H1 (cell line): ENCODE measurements at regions of chr1 and their contacts with region 1.

Region 1: DNA sequence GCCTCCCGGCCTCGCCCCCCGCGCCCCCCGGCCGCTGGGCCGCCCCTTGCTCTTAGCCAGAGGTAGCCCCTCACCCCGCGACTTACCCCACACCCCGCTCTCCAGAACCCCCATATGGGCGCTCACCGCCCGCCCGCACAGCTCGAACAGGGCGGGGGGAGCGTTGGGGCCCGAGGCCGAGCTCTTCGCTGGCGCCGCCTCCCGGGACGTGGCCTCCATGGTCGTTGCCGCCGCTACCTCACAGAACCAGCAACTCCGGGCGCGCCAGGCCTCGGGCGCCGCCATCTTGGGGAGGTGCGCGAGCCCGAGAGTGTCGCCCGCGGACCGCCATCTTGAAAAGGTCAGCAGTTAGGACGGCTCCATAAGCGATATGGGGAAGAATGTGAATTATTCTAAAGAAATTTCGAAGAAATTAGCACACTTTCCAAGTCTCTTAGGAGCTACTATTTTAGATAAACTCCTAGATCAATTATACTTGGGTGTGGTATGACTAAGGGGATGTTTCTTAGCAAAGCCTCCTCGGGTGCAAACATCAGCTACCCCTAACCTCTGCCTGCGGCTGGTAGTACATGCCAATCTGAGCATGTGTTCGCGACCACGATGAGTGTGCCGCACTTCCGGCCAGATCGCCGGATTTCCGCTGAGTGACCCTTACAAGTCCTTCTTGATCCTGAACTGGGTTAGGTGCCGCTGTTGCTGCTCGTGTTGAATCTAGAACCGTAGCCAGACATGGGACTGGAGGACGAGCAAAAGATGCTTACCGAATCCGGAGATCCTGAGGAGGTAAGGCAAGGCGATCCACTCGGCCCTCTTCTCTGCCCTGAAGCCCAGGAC is at the starts of genes LRRC41 and UQCRH:
- DNase-seq: peak; percentile 93 to 97
- H3K4me3 ChIP-seq: peak within 1 kb of the TSS; percentile 84 to 97 (median 90)
- H3K27ac ChIP-seq: peak within 1 kb of the TSS; percentile 92
- H3K4me1 ChIP-seq: peaks cover 5 to 17% (median 14%) of the 10 kb centered on the region in 4 experiments
- H3K27me3 ChIP-seq: no peaks in the 10 kb centered on the region
- CTCF ChIP-seq: peak in 2 of 3 experiments; percentile 3 to 9; a peak in 2 of 4 replicates
- EP300 ChIP-seq: peak in 1 of 2 experiments; percentile 99; a peak in 2 of 3 replicates
- POLR2A ChIP-seq: peak; percentile 62 to 94
- RAD21 ChIP-seq: no peak
- total RNA-seq, gene LRRC41: 36.8 and 37.2 TPM in 2 replicates
- total RNA-seq, gene UQCRH: 621 and 626 TPM in 2 replicates

Region 2: GRCh38 chr1:45998020-45998617 is 305.1 kb before region 1 on chr1:
- CTCF ChIA-PET with region 1: no interaction called
- POLR2A ChIA-PET with region 1: no interaction called
- DNase-seq: no peak
- H3K4me3 ChIP-seq: no peak overlapping the region
- H3K27ac ChIP-seq: no peak overlapping the region
- H3K4me1 ChIP-seq: peaks cover 0 to 5% (median 0%) of the 10 kb centered on the region in 4 experiments; a peak in 1 of 7 replicates
- H3K27me3 ChIP-seq: no peaks in the 10 kb centered on the region
- CTCF ChIP-seq: no peak
- EP300 ChIP-seq: no peak
- POLR2A ChIP-seq: no peak
- RAD21 ChIP-seq: no peak

Region 3: GRCh38 chr1:46247436-46248121 is 55.7 kb before region 1 on chr1 and contains the start of gene RAD54L:
- CTCF ChIA-PET with region 1: interaction called, 4 read pairs
- POLR2A ChIA-PET with region 1: interaction called, 10 read pairs
- DNase-seq: peak; percentile 96 to 98
- H3K4me3 ChIP-seq: peak within 1 kb of the TSS; percentile 87 to 94 (median 92)
- H3K27ac ChIP-seq: peak within 1 kb of the TSS; percentile 94
- H3K4me1 ChIP-seq: peaks cover 4 to 15% (median 5%) of the 10 kb centered on the region in 4 experiments; a peak in 5 of 7 replicates
- H3K27me3 ChIP-seq: no peaks in the 10 kb centered on the region
- CTCF ChIP-seq: no peak
- EP300 ChIP-seq: no peak
- POLR2A ChIP-seq: peak; percentile 75 to 97
- RAD21 ChIP-seq: no peak
- total RNA-seq, gene RAD54L: 47.9 and 50.3 TPM in 2 replicates

Region 4: DNA sequence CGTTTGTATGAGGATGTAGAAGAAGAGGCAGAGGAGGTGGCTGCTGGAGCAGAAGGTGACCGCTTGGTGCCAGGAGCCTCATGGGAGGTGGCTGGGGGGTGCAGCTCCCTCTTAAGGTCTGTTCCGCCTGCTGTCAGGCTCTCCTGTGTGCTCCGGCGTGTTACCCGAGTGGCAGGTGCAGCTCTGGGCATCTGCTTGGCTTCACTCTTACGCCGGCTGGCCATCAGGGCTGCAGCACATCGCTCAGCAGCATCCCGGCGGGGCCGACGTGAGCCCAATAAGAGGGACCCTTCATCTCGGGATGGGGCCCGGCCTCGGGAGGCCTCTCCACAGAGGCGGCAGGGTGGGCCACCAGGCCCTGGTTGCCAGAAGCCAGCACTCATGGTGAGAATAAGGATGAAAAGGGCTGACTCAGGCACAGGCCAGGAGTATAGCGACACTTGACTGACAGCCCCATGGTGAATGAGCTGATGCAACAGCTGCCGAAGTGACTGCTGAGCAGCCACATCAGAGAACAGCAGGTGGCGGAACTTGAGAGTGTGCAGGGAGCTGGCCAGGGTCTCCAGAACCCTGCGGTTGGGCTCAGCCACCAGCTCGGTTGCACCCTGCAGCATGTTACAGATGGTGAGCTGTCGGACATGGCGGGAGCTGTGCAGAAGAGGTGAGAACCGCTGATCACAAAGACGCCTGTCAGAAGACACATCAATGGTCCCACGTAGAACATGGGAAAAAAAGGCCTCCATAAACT is 17.4 kb before region 1 on chr1:
- CTCF ChIA-PET with region 1: interaction called, 3 read pairs
- POLR2A ChIA-PET with region 1: interaction called, 689 read pairs
- DNase-seq: peak in 1 of 2 experiments; percentile 25
- H3K4me3 ChIP-seq: no peak overlapping the region
- H3K27ac ChIP-seq: no peak overlapping the region
- H3K4me1 ChIP-seq: no peaks in the 10 kb centered on the region; a peak in 1 of 7 replicates
- H3K27me3 ChIP-seq: no peaks in the 10 kb centered on the region
- CTCF ChIP-seq: no peak
- EP300 ChIP-seq: no peak
- POLR2A ChIP-seq: no peak
- RAD21 ChIP-seq: no peak

Region 5: DNA sequence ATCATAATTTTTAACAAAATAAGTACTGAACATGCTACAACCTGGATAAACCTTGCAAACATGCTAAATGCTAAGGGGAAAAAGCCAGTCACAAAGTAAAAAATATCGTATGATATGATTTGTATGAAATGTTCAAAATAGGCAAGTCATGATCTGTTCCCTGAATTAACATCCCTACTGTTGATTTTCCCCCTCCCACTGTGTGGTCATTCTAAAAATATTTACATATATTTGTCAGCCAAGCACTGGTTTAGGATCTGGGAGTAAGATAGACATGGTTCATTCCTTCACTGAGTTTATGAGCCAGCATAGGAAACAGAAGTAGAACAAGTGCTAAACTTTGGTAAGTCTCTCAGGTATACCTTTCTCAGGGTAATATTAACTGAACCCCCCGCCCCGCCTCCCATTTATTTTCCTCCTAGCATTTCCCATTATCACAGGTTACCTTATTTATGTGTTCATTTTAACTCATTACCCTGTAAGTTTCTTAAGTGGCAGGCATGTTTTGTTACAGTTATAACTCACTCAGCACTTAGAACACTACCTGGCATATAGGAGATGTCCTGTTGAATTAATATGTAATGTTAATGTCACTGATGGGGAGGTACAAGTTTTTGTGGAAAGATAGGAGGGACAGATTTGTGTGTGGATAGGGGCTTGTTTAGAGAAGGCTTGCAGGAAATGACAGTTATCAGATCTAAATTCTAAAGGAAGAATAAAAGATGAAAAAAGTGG is 12.6 kb after region 1 on chr1:
- CTCF ChIA-PET with region 1: interaction called, 8 read pairs
- POLR2A ChIA-PET with region 1: interaction called, 70 read pairs
- DNase-seq: no peak
- H3K4me3 ChIP-seq: no peak overlapping the region
- H3K27ac ChIP-seq: no peak overlapping the region
- H3K4me1 ChIP-seq: no peaks in the 10 kb centered on the region
- H3K27me3 ChIP-seq: no peaks in the 10 kb centered on the region
- CTCF ChIP-seq: no peak
- EP300 ChIP-seq: no peak
- POLR2A ChIP-seq: peak in 1 of 2 experiments; percentile 30; a peak in 1 of 3 replicates
- RAD21 ChIP-seq: no peak

Region 6: GRCh38 chr1:46333300-46334029 is 30.2 kb after region 1 on chr1:
- CTCF ChIA-PET with region 1: interaction called, 8 read pairs
- POLR2A ChIA-PET with region 1: interaction called, 18 read pairs
- DNase-seq: peak in 1 of 2 experiments; percentile 34
- H3K4me3 ChIP-seq: no peak overlapping the region
- H3K27ac ChIP-seq: no peak overlapping the region
- H3K4me1 ChIP-seq: peaks cover 0 to 3% (median 0%) of the 10 kb centered on the region in 4 experiments; a peak in 1 of 7 replicates
- H3K27me3 ChIP-seq: no peaks in the 10 kb centered on the region
- CTCF ChIP-seq: peak in 2 of 3 experiments; percentile 50 to 55; a peak in 3 of 4 replicates
- EP300 ChIP-seq: no peak
- POLR2A ChIP-seq: no peak
- RAD21 ChIP-seq: peak; percentile 56 to 65

Region 7: GRCh38 chr1:46340404-46341221 is 37.4 kb after region 1 on chr1 and contains the start of gene NSUN4:
- CTCF ChIA-PET with region 1: interaction called, 21 read pairs
- POLR2A ChIA-PET with region 1: interaction called, 22 read pairs
- DNase-seq: peak; percentile 66 to 79
- H3K4me3 ChIP-seq: peak within 1 kb of the TSS; percentile 72 to 91 (median 86)
- H3K27ac ChIP-seq: peak within 1 kb of the TSS; percentile 83
- H3K4me1 ChIP-seq: peaks cover 0 to 7% (median 4%) of the 10 kb centered on the region in 4 experiments; a peak in 4 of 7 replicates
- H3K27me3 ChIP-seq: no peaks in the 10 kb centered on the region
- CTCF ChIP-seq: peak; percentile 65 to 72 (median 69)
- EP300 ChIP-seq: 0 out of 3 replicates have a peak, but pooled peaks of 1 of the 2 experiments have one; percentile 48
- POLR2A ChIP-seq: peak; percentile 69 to 74
- RAD21 ChIP-seq: peak; percentile 21 to 25; a peak in 3 of 4 replicates
- total RNA-seq, gene NSUN4: 13.7 and 15.7 TPM in 2 replicates

Region 8: GRCh38 chr1:46539972-46540371 is 236.7 kb after region 1 on chr1:
- CTCF ChIA-PET with region 1: no interaction called
- POLR2A ChIA-PET with region 1: no interaction called
- DNase-seq: no peak
- H3K4me3 ChIP-seq: no peak overlapping the region
- H3K27ac ChIP-seq: no peak overlapping the region
- H3K4me1 ChIP-seq: peaks cover 0 to 15% (median 8%) of the 10 kb centered on the region in 4 experiments; a peak in 6 of 7 replicates
- H3K27me3 ChIP-seq: peaks cover 21 to 63% (median 52%) of the 10 kb centered on the region in 4 experiments
- CTCF ChIP-seq: no peak
- EP300 ChIP-seq: no peak
- POLR2A ChIP-seq: no peak
- RAD21 ChIP-seq: no peak